Activated CD8-positive, alpha-beta memory T cell treated with anti-CD3 and anti-CD28 coated beads, Interleukin-2, amount 10 ng/mL, durations not matched to agents 7 days and 5 days (primary cell): ENCODE measurements at regions of chr19 and their contacts with region 1.

Region 1: DNA sequence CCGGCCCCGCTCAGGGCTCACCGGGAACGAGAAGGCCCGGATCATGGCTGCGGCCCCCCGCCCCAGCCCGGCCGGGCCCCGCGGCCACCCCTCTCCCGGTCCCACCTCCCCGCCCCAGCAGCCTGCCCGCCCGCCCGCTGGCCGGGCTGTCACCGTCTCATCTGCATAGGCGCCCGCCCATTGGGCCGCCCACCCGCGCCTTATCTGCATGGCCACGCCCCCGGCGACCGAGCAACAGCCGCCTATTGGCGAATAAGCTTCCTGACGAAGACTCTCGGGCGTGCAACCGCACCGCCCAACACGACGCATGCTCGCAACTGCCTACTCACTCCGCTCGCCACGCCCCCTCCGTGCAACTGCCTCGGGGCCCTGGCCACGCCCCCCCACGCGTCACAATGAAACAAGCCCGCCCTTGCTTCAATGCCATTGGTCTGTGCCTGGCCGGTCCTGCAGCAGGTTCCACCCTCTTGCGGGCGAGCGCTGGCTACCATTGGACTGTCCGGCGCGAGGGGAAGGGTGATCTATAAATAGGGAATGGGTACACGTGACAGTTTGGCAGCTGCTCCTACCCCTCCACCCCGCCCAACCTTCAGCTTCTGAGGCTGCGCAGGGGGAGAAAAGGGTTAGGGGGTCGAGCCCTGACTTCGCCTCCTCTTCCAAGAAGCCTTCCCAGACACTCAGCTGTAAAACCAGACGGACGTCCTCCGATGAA is at the start of gene DACT3:
- DNase-seq: peak; percentile 100
- ATAC-seq: peak; percentile 94
- H3K4me3 Mint-ChIP-seq: peak within 1 kb of the TSS; percentile 67
- H3K27ac Mint-ChIP-seq: peak within 1 kb of the TSS; percentile 76
- H3K4me1 Mint-ChIP-seq: peaks cover 17% of the 10 kb centered on the region
- H3K27me3 Mint-ChIP-seq: peaks cover 37% of the 10 kb centered on the region
- total RNA-seq, gene DACT3: 0.12 to 1.2 TPM

Region 2: DNA sequence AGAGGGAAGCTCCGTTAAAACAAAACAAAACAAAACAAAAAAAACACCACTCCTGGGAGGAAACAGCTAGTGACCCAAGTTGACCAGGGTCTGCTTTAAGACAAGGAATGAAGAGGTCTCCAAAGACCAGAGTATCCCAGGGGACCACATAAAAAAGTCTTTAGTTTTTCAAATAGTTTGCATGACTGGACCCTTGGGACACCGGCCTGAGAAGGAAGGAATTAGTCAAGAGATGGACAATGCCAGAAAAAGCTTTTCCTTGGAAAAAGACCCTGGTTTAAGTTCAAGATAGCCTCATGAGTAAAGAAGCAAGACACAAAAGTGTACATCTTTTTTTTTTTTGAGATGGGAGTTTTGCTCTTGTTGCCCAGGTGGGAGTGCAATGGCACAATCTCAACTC is 153.0 kb before region 1 on chr19:
- CTCF ChIA-PET with region 1: no interaction called
- DNase-seq: no peak
- ATAC-seq: no peak
- H3K4me3 Mint-ChIP-seq: no peak overlapping the region
- H3K27ac Mint-ChIP-seq: no peak overlapping the region
- H3K4me1 Mint-ChIP-seq: no peaks in the 10 kb centered on the region
- H3K27me3 Mint-ChIP-seq: peaks cover 52% of the 10 kb centered on the region

Region 3: DNA sequence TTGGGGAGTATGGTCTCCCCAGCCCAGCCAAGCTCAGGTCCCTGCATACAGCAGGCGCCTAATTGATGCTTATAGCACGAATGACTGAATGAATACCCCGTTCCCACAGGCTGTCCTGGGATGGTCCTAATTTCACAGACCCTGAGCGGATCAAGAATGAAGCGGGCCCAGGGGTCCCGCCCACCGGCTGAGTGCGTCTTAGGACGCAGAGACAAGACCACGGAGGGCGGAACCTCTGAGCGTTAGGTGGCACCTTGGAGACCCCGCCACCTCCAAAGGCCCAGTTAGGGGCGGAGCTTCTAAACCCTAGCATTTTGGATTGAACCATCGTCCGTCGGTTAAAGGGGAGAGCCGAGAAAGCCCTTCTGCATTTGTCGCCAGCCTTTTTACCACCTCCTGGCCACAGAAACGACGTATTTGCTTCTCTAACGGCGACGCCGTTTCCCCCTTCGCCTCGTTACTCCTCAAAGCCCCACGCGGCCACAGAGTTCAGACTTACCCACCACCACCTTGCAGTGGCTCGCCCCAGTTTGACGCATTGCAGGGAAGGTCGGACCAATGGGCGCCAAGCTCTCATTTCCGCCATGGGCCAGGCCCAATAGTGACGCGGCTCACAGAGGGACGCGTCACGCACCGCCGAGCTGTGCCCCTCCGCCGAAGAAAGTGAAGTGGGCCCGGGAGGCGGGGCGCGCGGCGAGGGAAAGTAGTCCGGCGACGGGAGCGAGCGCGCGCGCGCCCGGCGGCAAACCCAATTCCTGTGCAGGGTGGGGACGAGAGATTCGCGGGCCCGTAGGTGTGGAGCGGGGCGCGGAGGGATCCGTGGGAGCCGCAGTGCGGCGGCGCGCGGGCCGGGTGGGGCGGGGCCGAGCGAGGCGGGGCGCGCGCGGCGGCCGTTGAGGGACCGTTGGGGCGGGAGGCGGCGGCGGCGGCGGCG is 60.5 kb before region 1 on chr19:
- CTCF ChIA-PET with region 1: interaction called, 24 read pairs
- DNase-seq: peak; percentile 97
- ATAC-seq: peak; percentile 88
- H3K4me3 Mint-ChIP-seq: peak overlapping the region; percentile 98
- H3K27ac Mint-ChIP-seq: peak overlapping the region; percentile 100
- H3K4me1 Mint-ChIP-seq: peaks cover 32% of the 10 kb centered on the region
- H3K27me3 Mint-ChIP-seq: peaks cover 8% of the 10 kb centered on the region

Region 4: DNA sequence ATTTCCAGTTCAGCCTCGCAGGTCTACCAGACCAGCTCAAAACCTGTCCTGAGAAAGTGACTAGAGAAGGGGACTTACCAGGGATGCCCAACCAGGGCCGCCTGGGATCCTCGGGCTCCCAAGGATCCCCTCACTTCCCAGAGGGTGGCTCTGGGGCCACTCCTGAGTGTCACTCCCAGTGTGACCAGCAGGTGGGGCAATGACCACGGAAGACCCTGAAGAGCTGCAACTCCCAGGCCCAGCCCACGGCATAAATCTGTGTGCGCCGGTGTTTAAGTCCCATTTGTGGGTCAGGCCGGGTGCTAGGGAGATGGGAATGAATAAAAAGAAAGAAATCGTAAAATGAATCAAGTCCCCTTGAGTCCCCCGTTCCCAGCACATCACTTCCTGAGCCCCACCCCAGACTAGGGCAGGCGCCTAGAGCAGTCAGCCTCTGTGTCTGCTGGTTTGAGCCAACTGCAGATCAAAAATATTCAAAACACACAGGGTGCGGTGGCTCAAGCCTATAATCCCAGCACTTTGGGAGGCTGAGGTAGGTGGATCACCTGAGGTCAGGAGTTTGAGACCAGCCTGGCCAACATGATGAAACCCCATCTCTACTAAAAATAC is 47.0 kb before region 1 on chr19:
- CTCF ChIA-PET with region 1: interaction called, 169 read pairs
- DNase-seq: peak; percentile 87
- ATAC-seq: peak; percentile 73
- H3K4me3 Mint-ChIP-seq: no peak overlapping the region
- H3K27ac Mint-ChIP-seq: peak overlapping the region; percentile 22
- H3K4me1 Mint-ChIP-seq: peaks cover 63% of the 10 kb centered on the region
- H3K27me3 Mint-ChIP-seq: no peaks in the 10 kb centered on the region

Region 5: GRCh38 chr19:46644720-46645119 is 16.5 kb before region 1 on chr19:
- CTCF ChIA-PET with region 1: interaction called, 12 read pairs
- DNase-seq: no peak
- ATAC-seq: no peak
- H3K4me3 Mint-ChIP-seq: no peak overlapping the region
- H3K27ac Mint-ChIP-seq: no peak overlapping the region
- H3K4me1 Mint-ChIP-seq: peaks cover 8% of the 10 kb centered on the region
- H3K27me3 Mint-ChIP-seq: peaks cover 60% of the 10 kb centered on the region

Region 6: GRCh38 chr19:46704379-46705076 is 43.4 kb after region 1 on chr19:
- CTCF ChIA-PET with region 1: interaction called, 12 read pairs
- DNase-seq: peak; percentile 90
- ATAC-seq: peak; percentile 88
- H3K4me3 Mint-ChIP-seq: no peak overlapping the region
- H3K27ac Mint-ChIP-seq: peak overlapping the region; percentile 67
- H3K4me1 Mint-ChIP-seq: peaks cover 6% of the 10 kb centered on the region
- H3K27me3 Mint-ChIP-seq: no peaks in the 10 kb centered on the region

Region 7: GRCh38 chr19:46736544-46737297 is 75.5 kb after region 1 on chr19:
- CTCF ChIA-PET with region 1: no interaction called
- DNase-seq: no peak
- ATAC-seq: no peak
- H3K4me3 Mint-ChIP-seq: no peak overlapping the region
- H3K27ac Mint-ChIP-seq: no peak overlapping the region
- H3K4me1 Mint-ChIP-seq: peaks cover 14% of the 10 kb centered on the region
- H3K27me3 Mint-ChIP-seq: no peaks in the 10 kb centered on the region